Activated CD8-positive, alpha-beta T cell treated with anti-CD3 and anti-CD28 coated beads for 36 hours (primary cell): ENCODE measurements at regions of chr13 and their contacts with region 1.

Region 1: DNA sequence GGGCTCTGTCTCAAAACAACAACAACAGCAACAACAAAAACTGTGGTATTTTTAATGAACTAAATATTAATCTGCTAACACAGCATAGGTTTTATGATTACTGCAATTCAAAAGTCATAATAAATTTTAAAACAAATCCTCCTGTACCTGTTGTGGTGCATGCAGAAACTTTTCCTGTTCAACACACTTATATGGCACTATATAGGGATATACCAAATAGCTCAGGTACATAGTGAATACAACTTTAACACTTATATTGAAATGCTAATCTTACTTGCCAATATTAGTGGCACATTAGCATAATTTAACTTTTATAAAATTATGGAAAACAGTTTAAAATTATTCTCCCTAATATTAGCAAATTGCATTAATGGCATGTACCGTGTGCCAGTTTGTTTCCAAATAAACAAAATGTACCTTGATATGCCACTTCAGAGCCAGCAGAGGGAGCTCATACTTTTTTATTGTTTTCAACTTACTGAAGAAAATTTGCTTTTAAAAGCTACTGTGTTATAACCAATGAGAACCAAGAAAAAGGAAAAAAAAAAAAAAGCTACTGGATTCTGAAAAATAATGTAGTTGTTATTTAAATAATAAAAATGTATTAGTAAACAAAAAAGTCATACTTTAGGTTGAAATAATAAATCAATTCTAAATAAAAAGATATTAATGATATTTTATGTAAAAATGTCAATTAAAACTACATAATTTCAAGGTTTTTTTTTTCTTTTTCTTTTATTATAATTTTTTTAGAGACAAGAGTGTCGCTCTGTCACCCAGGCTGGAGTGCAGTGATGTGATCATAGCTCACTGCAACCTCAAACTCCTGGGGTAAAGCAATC is 18.0 kb upstream of the RBM26 start:
- DNase-seq: no peak
- ATAC-seq: peak; percentile 70
- H3K4me3 Mint-ChIP-seq: no peak overlapping the region
- H3K27ac Mint-ChIP-seq: no peak overlapping the region
- H3K4me1 Mint-ChIP-seq: peaks cover 6% of the 10 kb centered on the region
- H3K27me3 Mint-ChIP-seq: no peaks in the 10 kb centered on the region
- CTCF ChIP-seq: peak; percentile 91

Region 2: GRCh38 chr13:79314652-79315051 is 109.4 kb before region 1 on chr13:
- CTCF ChIA-PET with region 1: no interaction called
- POLR2A ChIA-PET with region 1: no interaction called
- intact Hi-C with region 1: no loop called
- DNase-seq: no peak
- ATAC-seq: no peak
- H3K4me3 Mint-ChIP-seq: no peak overlapping the region
- H3K27ac Mint-ChIP-seq: no peak overlapping the region
- H3K4me1 Mint-ChIP-seq: no peaks in the 10 kb centered on the region
- H3K27me3 Mint-ChIP-seq: no peaks in the 10 kb centered on the region
- CTCF ChIP-seq: no peak

Region 3: GRCh38 chr13:79385694-79386093 is 38.3 kb before region 1 on chr13:
- CTCF ChIA-PET with region 1: no interaction called
- POLR2A ChIA-PET with region 1: no interaction called
- intact Hi-C with region 1: no loop called
- DNase-seq: peak; percentile 70
- ATAC-seq: peak; percentile 87
- H3K4me3 Mint-ChIP-seq: peak overlapping the region; percentile 15
- H3K27ac Mint-ChIP-seq: peak overlapping the region; percentile 66
- H3K4me1 Mint-ChIP-seq: peaks cover 83% of the 10 kb centered on the region
- H3K27me3 Mint-ChIP-seq: no peaks in the 10 kb centered on the region
- CTCF ChIP-seq: no peak

Region 4: DNA sequence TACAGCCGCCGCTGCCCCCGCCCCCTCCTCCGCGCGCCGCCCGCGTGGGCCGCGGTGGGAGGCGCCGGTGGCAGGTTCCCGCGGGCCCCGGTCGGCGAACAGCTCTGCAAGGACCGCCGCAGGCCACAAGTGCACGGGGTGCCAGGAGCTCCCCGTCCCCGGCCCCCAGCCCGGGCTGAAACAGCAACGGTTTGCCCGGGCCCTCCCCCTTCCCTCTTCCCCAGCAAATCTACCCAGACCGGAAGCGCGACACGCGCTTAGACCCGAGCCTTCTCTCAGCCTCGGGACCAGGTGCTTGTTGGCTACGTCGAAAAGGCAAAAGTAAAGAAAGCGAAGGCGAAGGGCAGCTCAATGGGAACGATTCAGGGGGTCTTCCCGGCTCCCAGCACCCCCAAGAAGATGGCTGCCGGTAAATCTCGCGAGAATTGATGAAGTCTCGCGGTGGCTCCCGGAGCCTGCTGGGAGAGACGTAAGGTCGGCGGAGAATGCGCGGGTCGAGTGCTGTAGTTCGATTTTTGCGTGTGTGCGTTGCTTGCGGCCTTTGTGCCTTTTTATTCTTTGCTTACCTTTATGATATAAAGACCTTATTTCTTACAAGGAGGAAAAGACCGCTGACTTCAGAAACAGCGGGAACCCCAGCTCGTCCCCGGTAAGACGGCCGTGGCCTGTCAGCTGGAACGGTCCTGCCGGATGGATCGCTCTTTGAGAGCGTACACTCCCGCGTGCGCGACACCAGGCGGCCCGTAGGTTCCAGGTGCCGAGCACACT is 18.0 kb before region 1 on chr13 and contains the start of gene RBM26:
- CTCF ChIA-PET with region 1: interaction called, 11 read pairs
- POLR2A ChIA-PET with region 1: interaction called, 9 read pairs
- intact Hi-C with region 1: no loop called
- DNase-seq: peak; percentile 96
- ATAC-seq: peak; percentile 90
- H3K4me3 Mint-ChIP-seq: no peak within 1 kb of the TSS
- H3K27ac Mint-ChIP-seq: peak within 1 kb of the TSS; percentile 98
- H3K4me1 Mint-ChIP-seq: peaks cover 49% of the 10 kb centered on the region
- H3K27me3 Mint-ChIP-seq: no peaks in the 10 kb centered on the region
- CTCF ChIP-seq: no peak
- total RNA-seq, gene RBM26: 57.6 to 61.1 TPM

Region 5: DNA sequence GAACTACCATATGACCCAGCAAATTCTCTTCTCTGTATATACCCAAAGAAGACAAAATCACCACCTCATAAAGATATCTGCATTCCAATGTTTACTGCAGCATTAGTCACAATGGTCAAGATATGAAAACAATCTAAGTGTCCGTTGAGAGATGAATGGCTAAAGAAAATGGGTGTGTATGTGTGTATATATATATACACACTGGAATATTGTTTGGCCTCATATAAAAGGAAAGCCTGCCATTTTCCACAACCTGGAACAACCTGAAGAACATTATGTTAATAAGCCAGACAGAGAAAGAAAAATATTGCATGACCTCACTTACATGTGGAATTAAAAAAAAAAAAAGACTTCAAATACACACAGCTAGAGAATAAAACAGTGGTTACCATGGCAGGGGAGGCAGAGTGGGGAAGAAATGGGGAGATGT is 11.6 kb after region 1 on chr13:
- CTCF ChIA-PET with region 1: interaction called, 15 read pairs
- POLR2A ChIA-PET with region 1: no interaction called
- intact Hi-C with region 1: no loop called
- DNase-seq: no peak
- ATAC-seq: no peak
- H3K4me3 Mint-ChIP-seq: no peak overlapping the region
- H3K27ac Mint-ChIP-seq: no peak overlapping the region
- H3K4me1 Mint-ChIP-seq: peaks cover 16% of the 10 kb centered on the region
- H3K27me3 Mint-ChIP-seq: no peaks in the 10 kb centered on the region
- CTCF ChIP-seq: no peak

Region 6: DNA sequence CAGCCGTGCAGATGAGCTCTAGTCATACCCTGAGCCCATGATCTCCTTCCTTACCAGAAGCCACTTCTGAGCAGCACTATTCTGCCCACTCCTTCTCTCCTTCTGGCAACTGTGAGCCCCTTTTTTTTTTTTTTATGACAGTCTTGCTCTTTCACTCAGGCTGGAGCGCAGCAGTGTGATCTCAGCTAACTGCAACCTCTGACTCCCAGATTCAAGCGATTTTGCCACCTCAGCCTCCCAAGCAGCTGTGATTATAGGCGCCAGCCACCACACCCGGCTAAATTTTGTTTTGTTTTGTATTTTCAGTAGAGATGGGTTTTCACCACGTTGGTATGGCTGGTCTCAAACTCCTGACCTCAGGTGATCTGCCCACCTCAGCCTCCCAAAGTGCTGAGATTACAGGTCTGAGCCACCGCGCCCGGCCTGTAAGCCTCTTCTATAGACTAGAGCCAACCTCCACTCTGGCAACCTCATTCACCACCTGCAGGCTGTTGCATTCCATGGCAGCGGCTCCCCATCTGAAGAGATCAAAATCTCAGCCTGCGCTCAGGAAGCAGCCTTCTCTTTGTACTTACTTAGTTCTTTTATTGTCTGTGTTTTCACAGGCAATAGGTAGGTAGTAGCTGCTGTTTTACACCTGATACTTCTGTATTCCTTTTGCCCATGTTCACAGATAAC is 22.1 kb after region 1 on chr13:
- CTCF ChIA-PET with region 1: interaction called, 18 read pairs
- POLR2A ChIA-PET with region 1: interaction called, 3 read pairs
- intact Hi-C with region 1: no loop called
- DNase-seq: peak; percentile 47
- ATAC-seq: peak; percentile 71
- H3K4me3 Mint-ChIP-seq: peak overlapping the region; percentile 3
- H3K27ac Mint-ChIP-seq: peak overlapping the region; percentile 53
- H3K4me1 Mint-ChIP-seq: peaks cover 53% of the 10 kb centered on the region
- H3K27me3 Mint-ChIP-seq: no peaks in the 10 kb centered on the region
- CTCF ChIP-seq: no peak

Region 7: GRCh38 chr13:79480954-79481684 is 57.1 kb after region 1 on chr13 and contains the start of gene NDFIP2:
- CTCF ChIA-PET with region 1: interaction called, 40 read pairs
- POLR2A ChIA-PET with region 1: interaction called, 4 read pairs
- intact Hi-C with region 1: no loop called
- DNase-seq: peak; percentile 90
- ATAC-seq: peak; percentile 75
- H3K4me3 Mint-ChIP-seq: peak within 1 kb of the TSS; percentile 82
- H3K27ac Mint-ChIP-seq: peak within 1 kb of the TSS; percentile 91
- H3K4me1 Mint-ChIP-seq: peaks cover 54% of the 10 kb centered on the region
- H3K27me3 Mint-ChIP-seq: peaks cover 5% of the 10 kb centered on the region
- CTCF ChIP-seq: no peak
- total RNA-seq, gene NDFIP2: 67.4 to 69.1 TPM

Region 8: DNA sequence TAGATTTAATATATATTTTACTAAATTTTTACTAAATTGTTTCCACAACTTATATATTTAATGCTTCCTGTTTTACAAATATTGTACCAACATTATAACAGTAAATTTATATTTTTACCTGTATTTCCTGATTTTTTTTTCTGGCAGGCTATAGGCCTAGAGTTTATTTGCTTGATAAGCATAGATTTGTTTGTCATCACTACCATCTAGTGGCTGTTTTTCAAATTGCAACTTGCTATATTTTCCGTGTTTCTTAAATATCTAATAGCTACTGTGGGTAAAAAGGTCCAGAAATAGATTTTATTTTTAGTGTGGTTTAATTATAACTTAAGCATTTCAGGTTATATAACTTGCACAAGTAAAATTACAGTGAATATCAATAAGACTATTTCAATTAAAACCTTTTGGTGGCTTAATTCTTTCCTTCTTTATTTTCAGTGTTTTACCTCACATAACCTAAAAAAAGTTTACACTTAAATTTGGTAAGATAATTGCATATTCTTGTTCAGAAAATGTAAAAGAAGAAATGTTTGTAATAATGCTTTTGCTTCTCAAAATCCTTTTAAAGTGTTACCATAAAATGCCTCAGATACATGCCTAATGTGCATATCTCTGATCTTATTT is 117.5 kb after region 1 on chr13:
- CTCF ChIA-PET with region 1: interaction called, 156 read pairs
- POLR2A ChIA-PET with region 1: no interaction called
- intact Hi-C with region 1: loop called (anchors 1 kb)
- DNase-seq: no peak
- ATAC-seq: peak; percentile 62
- H3K4me3 Mint-ChIP-seq: no peak overlapping the region
- H3K27ac Mint-ChIP-seq: no peak overlapping the region
- H3K4me1 Mint-ChIP-seq: peaks cover 3% of the 10 kb centered on the region
- H3K27me3 Mint-ChIP-seq: no peaks in the 10 kb centered on the region
- CTCF ChIP-seq: peak; percentile 97